ENCODE measurements at regions of chr6 and their contacts with region 1.

Region 1: DNA sequence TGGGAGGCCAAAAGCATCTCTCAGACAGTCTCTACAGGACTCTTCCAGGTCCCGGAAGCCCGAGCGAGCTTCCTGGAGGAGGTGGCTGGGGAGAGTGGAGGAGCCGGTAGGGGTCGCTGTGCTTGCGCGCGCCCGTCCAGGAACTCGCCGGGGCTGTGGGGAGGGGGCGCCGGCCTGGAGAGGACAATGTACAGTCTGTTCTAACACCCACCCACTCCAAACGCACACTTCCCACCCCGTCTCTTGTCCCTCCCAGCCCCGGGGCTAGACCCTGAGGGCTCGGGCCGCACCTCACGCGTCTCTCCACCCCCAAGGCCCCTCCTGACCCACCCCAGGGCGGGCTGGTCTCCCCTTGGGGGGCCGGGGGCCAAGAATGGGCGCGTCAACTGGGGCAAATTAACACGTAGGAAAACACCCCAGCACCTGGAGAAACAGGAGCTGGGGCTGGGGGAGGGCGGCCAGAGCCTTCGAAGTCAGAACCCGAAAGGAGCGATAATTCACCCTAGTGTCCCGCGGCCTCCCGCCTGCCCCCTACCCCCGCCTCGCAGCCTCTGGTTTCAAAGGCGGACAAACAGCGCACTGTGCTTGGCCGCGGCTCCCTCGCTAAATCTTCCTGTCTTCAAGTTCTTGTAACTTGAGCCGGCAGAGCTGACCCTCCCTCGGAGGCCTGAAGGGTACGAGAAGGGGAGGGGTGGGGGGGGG is 103.2 kb upstream of the FOXP4 start:
- DNase-seq: peak; percentile 71 to 93
- H3K4me3 ChIP-seq: peak overlapping the region; percentile 43 to 76 (median 51)
- H3K27ac ChIP-seq: peak overlapping the region; percentile 10; the same call in 1 of the 2 replicates
- H3K4me1 ChIP-seq: peaks cover 10 to 24% (median 14%) of the 10 kb centered on the region in 4 experiments
- H3K27me3 ChIP-seq: peaks cover 1 to 21% (median 13%) of the 10 kb centered on the region in 4 experiments
- CTCF ChIP-seq: peak; percentile 80 to 87 (median 83)
- EP300 ChIP-seq: no peak
- POLR2A ChIP-seq: no peak; a peak in 1 of 3 replicates
- RAD21 ChIP-seq: peak; percentile 67 to 78

Region 2: DNA sequence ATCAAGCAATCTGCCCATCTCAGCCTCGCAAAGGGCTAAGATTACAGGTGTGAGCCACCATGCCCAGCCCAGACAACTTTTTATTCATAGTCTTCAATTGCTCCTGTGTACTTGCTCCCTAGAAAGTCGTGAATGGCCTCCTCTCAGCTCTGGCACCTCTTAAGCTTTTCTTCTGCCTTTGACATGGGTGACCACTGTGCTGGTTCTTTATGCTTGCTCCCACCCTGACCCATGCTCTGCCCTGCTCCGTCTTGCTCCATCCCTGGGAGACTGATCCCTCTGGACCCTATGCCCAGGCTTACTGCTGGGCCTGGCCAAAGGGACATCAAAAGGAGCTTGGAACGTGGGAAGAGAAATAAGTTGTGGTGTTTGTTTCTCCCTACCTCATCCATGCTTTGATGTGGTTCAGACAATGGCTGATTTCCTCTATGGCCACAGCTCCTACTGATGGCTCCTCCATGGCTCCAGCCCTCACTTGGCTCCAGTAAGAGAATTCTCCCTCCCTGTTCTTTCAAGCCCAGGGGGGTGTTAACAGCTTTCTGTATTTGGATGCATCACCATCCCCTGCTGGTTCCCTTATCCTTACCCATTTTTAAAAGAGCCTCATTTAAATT is 272.3 kb before region 1 on chr6:
- CTCF ChIA-PET with region 1: no interaction called
- POLR2A ChIA-PET with region 1: no interaction called
- DNase-seq: peak in 1 of 2 experiments; percentile 34
- H3K4me3 ChIP-seq: no peak overlapping the region; a peak in 1 of 8 replicates
- H3K27ac ChIP-seq: no peak overlapping the region
- H3K4me1 ChIP-seq: peaks cover 0 to 12% (median 8%) of the 10 kb centered on the region in 4 experiments; a peak in 5 of 7 replicates
- H3K27me3 ChIP-seq: no peaks in the 10 kb centered on the region
- CTCF ChIP-seq: no peak
- EP300 ChIP-seq: no peak
- POLR2A ChIP-seq: no peak
- RAD21 ChIP-seq: no peak

Region 3: GRCh38 chr6:41318654-41319565 is 124.0 kb before region 1 on chr6:
- CTCF ChIA-PET with region 1: no interaction called
- POLR2A ChIA-PET with region 1: no interaction called
- DNase-seq: peak; percentile 82 to 90
- H3K4me3 ChIP-seq: peak overlapping the region in 2 of 4 experiments; percentile 16 to 47; a peak in 3 of 8 replicates
- H3K27ac ChIP-seq: no peak overlapping the region
- H3K4me1 ChIP-seq: peaks cover 0 to 13% (median 3%) of the 10 kb centered on the region in 4 experiments; a peak in 5 of 7 replicates
- H3K27me3 ChIP-seq: peaks cover 0 to 4% (median 2%) of the 10 kb centered on the region in 4 experiments; a peak in 1 of 7 replicates
- CTCF ChIP-seq: peak; percentile 97 to 100 (median 100)
- EP300 ChIP-seq: no peak
- POLR2A ChIP-seq: peak in 1 of 2 experiments; percentile 59; a peak in 2 of 3 replicates
- RAD21 ChIP-seq: peak; percentile 95 to 96

Region 4: GRCh38 chr6:41424370-41425058 is 18.4 kb before region 1 on chr6:
- CTCF ChIA-PET with region 1: interaction called, 239 read pairs
- POLR2A ChIA-PET with region 1: interaction called, 4 read pairs
- DNase-seq: peak in 1 of 2 experiments; percentile 97
- H3K4me3 ChIP-seq: no peak overlapping the region
- H3K27ac ChIP-seq: no peak overlapping the region
- H3K4me1 ChIP-seq: peaks cover 3 to 29% (median 8%) of the 10 kb centered on the region in 4 experiments
- H3K27me3 ChIP-seq: peaks cover 24 to 62% (median 54%) of the 10 kb centered on the region in 4 experiments
- CTCF ChIP-seq: peak; percentile 34 to 88 (median 85)
- EP300 ChIP-seq: no peak
- POLR2A ChIP-seq: no peak
- RAD21 ChIP-seq: peak; percentile 72 to 82

Region 5: DNA sequence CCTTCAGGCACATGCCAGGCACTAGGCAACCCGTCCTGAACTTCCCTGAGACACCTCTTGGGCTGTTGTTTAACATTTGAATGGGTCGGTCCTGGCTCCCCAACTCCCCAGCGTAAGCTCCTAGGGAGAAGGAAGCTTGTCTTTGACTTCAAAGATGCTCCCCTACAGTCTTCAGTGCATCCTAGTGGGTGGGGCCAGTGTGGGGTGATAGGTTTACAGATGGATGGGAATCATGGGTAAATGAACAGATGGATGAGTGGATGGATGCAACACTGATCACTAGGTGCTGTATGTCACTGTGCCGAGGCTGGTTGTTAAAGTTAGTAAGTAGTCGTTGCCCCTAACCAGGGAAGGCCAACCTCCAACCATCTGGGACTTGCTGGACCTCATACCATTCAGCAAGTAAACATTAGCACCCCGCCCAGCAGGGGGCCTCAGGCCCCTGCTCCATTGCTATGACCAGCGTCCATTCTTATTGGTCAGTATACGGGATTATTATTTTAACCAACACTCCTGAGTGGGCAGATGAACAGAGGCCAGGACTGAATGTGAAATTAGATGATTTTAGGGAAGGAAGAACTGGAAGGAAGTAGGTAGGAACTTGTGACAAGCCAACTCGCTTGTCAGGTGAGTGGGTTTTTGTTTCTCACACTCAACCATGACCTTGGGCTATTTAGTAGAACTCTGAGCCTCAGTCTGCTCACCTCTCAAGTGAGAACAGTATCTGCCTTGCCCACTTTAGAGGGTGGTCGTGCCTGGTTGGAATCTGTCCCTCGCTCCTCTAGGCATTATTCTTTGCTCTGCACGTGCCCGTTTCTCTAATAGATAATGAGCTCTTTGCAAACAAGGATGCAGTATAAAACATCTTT is 20.3 kb after region 1 on chr6:
- CTCF ChIA-PET with region 1: interaction called, 130 read pairs
- POLR2A ChIA-PET with region 1: interaction called, 3 read pairs
- DNase-seq: no peak
- H3K4me3 ChIP-seq: no peak overlapping the region
- H3K27ac ChIP-seq: no peak overlapping the region
- H3K4me1 ChIP-seq: peaks cover 2 to 18% (median 5%) of the 10 kb centered on the region in 4 experiments; a peak in 5 of 7 replicates
- H3K27me3 ChIP-seq: peaks cover 0 to 35% (median 19%) of the 10 kb centered on the region in 4 experiments; a peak in 6 of 7 replicates
- CTCF ChIP-seq: no peak
- EP300 ChIP-seq: no peak
- POLR2A ChIP-seq: no peak
- RAD21 ChIP-seq: peak in 1 of 2 experiments; percentile 43; a peak in 3 of 4 replicates

Region 6: DNA sequence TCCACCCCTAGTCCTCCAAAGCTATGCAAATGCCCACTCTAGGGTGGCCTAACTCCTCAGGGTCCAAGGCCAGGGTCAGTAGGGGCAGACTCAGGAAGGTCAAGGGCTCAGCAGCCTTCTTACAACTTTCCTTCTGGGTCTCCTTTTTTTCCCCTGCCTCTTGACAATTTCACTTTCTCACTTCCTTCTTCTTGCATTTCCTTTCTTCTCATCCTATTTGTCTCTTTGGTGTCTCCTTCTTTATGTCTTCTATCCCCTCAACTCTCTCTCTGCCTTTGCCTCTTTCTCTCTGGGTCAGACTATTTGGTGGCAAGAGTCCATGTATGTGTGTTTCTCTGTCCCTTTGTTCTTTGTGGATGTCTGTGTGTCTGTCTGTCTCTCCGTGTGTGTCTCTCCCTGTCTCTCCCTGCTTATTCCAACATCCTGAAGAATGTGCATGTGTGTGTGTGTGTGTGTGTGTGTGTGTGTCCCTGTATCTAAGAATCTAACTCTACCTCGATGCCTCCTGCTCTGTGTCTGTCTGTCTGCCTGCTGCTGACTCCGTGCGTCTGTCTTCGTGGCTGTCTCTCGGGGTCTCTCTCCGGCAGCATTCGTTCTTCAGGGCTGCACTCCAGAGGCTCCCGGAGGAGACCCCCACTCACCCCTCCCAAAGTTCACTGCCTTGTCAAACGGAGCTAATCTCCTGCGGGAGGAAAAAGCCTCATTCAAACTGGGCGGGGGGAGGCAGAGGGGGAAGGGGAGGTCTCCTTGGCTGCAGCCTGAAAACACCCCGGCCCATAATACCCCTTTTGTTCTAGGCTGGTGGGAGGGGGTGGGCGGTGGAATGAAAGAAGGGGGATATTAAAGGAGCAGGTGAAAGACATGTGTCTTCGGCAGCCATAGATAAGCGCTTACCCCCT is 51.5 kb after region 1 on chr6:
- CTCF ChIA-PET with region 1: interaction called, 12 read pairs
- POLR2A ChIA-PET with region 1: no interaction called
- DNase-seq: no peak
- H3K4me3 ChIP-seq: peak overlapping the region in 1 of 4 experiments; percentile 40; a peak in 2 of 8 replicates
- H3K27ac ChIP-seq: no peak overlapping the region
- H3K4me1 ChIP-seq: peaks cover 7 to 28% (median 23%) of the 10 kb centered on the region in 4 experiments
- H3K27me3 ChIP-seq: peaks cover 0 to 51% (median 29%) of the 10 kb centered on the region in 4 experiments; a peak in 5 of 7 replicates
- CTCF ChIP-seq: no peak
- EP300 ChIP-seq: no peak
- POLR2A ChIP-seq: no peak
- RAD21 ChIP-seq: no peak

Region 7: DNA sequence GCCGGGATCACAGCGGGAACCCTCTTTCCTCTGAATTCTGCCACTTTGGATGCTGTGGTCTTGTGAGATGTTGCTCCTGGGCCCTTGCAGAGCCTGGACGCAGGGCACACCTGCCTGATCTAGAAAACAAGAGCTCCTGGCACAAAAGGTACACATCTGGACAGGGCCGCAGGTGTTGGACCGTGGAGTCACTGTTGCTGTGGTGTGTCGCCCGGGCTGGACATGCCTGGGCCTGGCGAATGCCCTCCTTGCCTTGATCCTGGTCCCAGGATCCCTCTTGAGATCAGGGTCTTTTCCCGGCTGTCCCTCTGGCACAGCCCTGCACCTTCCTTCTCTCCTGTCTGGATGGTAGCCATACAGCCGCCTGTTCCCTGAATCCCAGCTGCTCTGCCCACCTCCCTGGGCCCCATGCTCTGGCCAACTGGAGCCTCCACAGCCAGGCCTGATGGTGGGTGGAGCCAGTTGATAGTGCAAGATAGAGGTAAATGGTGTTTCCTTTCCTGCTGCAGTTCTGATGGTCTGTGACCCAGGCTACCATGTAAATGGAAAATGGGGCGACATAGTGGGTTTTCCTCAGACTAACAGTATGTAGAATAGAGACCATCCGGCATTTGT is 108.2 kb after region 1 on chr6:
- CTCF ChIA-PET with region 1: interaction called, 56 read pairs
- POLR2A ChIA-PET with region 1: no interaction called
- DNase-seq: no peak
- H3K4me3 ChIP-seq: no peak overlapping the region
- H3K27ac ChIP-seq: no peak overlapping the region
- H3K4me1 ChIP-seq: peaks cover 41 to 70% (median 50%) of the 10 kb centered on the region in 4 experiments
- H3K27me3 ChIP-seq: peaks cover 20 to 78% (median 73%) of the 10 kb centered on the region in 4 experiments
- CTCF ChIP-seq: no peak
- EP300 ChIP-seq: no peak
- POLR2A ChIP-seq: no peak
- RAD21 ChIP-seq: no peak

Measured in H1 (cell line).